ENCODE measurements at regions of chr7 and their contacts with region 1.

Region 1: DNA sequence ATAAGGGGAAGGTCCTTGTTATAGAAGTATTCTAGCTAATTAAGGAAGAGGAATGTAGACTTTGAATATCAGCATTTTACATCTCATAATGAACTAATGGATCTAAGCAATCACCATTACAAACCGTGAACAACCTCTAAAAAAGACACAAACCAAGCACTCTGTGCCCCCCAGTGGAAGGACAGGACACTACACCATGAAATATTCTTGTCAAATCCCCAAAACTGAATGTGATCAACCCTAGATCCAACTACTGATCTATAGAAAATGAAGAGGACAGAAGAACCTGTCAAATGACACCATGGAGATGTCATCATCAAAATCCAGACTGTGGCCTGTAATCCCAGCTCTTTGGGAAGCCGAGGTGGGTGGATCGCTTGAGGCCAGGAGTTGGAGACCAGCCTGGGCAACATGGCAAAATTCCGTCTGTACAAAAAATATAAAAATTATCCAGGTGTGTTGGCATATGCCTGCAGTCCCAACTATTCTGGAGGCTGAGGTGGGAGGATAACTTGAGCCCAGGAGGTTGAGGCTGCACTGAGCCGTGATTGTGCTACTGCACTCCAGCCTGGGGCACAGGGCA is 111.3 kb upstream of the CARD11 start:
- DNase-seq: peak; percentile 27 to 79 (median 66)
- ATAC-seq: peak; percentile 89
- H3K4me3 ChIP-seq: no peak overlapping the region
- H3K4me3 Mint-ChIP-seq: no peak overlapping the region
- H3K27ac ChIP-seq: no peak overlapping the region
- H3K27ac Mint-ChIP-seq: no peak overlapping the region
- H3K4me1 ChIP-seq: peaks cover 12% of the 10 kb centered on the region
- H3K4me1 Mint-ChIP-seq: peaks cover 13% of the 10 kb centered on the region
- H3K27me3 ChIP-seq: no peaks in the 10 kb centered on the region
- H3K27me3 Mint-ChIP-seq: no peaks in the 10 kb centered on the region
- CTCF ChIP-seq: peak; percentile 89

Region 2: GRCh38 chr7:1412322-1413261 is 1742.4 kb before region 1 on chr7:
- CTCF ChIA-PET with region 1: no interaction called
- POLR2A ChIA-PET with region 1: no interaction called
- intact Hi-C with region 1: no loop called
- DNase-seq: peak; percentile 80 to 97 (median 89)
- ATAC-seq: peak; percentile 91
- H3K4me3 ChIP-seq: peak overlapping the region; percentile 23 to 30
- H3K4me3 Mint-ChIP-seq: peak overlapping the region; percentile 61
- H3K27ac ChIP-seq: peak overlapping the region in 1 of 2 experiments; percentile 22
- H3K27ac Mint-ChIP-seq: no peak overlapping the region
- H3K4me1 ChIP-seq: peaks cover 24% of the 10 kb centered on the region
- H3K4me1 Mint-ChIP-seq: peaks cover 13% of the 10 kb centered on the region
- H3K27me3 ChIP-seq: peaks cover 0 to 3% of the 10 kb centered on the region in 2 experiments
- H3K27me3 Mint-ChIP-seq: peaks cover 6% of the 10 kb centered on the region
- CTCF ChIP-seq: peak; percentile 81

Region 3: GRCh38 chr7:2886900-2887299 is 268.1 kb before region 1 on chr7:
- CTCF ChIA-PET with region 1: interaction called, 33 read pairs
- POLR2A ChIA-PET with region 1: no interaction called
- intact Hi-C with region 1: loop called (anchors 1 kb)
- DNase-seq: peak in 7 of 9 experiments; percentile 14 to 83 (median 64)
- ATAC-seq: peak; percentile 77
- H3K4me3 ChIP-seq: no peak overlapping the region
- H3K4me3 Mint-ChIP-seq: no peak overlapping the region
- H3K27ac ChIP-seq: no peak overlapping the region
- H3K27ac Mint-ChIP-seq: no peak overlapping the region
- H3K4me1 ChIP-seq: no peaks in the 10 kb centered on the region
- H3K4me1 Mint-ChIP-seq: peaks cover 4% of the 10 kb centered on the region
- H3K27me3 ChIP-seq: no peaks in the 10 kb centered on the region
- H3K27me3 Mint-ChIP-seq: no peaks in the 10 kb centered on the region
- CTCF ChIP-seq: peak; percentile 69

Region 4: DNA sequence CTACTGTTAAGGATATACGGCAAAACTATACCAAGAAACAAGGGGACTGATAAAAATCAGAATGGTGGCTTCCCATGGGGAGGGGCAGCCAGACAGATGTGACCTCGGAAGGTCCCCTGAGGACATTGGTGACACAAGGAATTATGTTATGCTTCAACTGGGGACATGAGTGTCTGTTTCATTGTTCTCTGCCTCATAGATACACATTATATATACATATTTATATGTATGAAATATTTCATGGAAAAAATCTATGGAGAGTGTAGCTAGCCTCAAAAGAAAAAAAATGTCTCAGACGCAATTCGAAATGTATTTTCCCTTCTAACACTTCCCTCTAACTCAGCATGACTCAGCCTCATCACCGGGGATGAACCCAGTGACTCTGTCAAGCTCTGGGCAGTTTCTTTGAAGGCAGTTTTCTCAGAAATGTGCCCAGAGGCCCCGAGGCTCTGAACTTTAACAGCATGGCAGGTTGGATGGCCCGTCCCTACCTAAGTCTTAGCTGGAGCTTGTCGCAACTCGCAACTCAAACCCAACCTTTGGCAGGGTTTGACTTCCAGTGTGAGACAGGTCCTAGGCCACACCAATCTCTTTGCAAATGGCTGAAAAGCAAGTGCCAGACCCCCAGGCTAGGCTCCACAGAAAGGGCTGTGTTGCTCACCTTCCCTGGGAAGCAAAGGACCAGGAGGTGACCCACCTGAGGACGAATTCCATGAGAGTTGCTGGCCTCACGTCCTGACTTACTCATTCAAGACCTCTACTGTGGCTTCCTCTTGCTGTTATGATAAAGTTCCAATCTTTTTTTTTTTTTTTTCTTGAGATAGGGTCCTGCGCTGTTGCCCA is 198.3 kb before region 1 on chr7:
- CTCF ChIA-PET with region 1: interaction called, 5 read pairs
- POLR2A ChIA-PET with region 1: interaction called, 3 read pairs
- intact Hi-C with region 1: loop called in 1 of 2 experiments (anchors 10 kb)
- DNase-seq: peak in 4 of 9 experiments; percentile 20 to 57 (median 43)
- ATAC-seq: peak; percentile 33
- H3K4me3 ChIP-seq: no peak overlapping the region
- H3K4me3 Mint-ChIP-seq: no peak overlapping the region
- H3K27ac ChIP-seq: peak overlapping the region; percentile 10 to 60
- H3K27ac Mint-ChIP-seq: peak overlapping the region; percentile 72
- H3K4me1 ChIP-seq: peaks cover 53% of the 10 kb centered on the region
- H3K4me1 Mint-ChIP-seq: peaks cover 63% of the 10 kb centered on the region
- H3K27me3 ChIP-seq: no peaks in the 10 kb centered on the region
- H3K27me3 Mint-ChIP-seq: no peaks in the 10 kb centered on the region
- CTCF ChIP-seq: no peak

Region 5: DNA sequence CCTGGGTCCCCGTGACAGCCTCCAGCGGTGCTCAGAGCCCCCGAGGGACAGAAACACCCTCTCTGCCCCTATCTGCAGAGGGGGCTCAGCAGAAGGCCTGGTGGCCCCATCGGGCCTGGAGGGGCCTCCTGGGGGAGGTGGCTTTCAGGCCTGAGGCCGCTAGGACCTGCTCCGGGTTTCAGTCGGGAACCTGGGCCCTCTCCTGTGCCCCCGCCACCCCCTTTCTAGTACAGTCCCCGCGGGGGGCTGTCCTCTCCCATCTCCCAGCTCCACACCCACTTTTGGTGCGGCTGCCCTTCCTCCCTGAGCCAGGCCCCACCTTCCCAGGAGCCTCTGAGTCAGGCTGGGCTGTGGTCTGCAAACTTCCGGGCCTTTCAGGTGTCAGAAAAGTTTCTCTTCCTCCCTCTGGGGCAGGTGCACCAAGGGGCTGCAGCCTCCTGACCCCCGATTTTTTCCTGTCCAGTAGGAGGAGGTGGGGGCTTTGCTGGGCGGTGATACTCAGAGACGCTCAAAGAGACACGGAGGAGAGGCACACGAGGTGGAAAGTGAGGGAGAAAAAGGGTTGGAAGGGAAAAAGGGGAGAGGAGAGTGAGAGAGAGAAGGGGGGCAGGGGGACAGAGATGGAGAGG is 112.0 kb before region 1 on chr7:
- CTCF ChIA-PET with region 1: interaction called, 21 read pairs
- POLR2A ChIA-PET with region 1: no interaction called
- intact Hi-C with region 1: loop called (anchors 1 to 5 kb)
- DNase-seq: peak; percentile 20 to 82 (median 73)
- ATAC-seq: peak; percentile 61
- H3K4me3 ChIP-seq: peak overlapping the region; percentile 84 to 96
- H3K4me3 Mint-ChIP-seq: peak overlapping the region; percentile 92
- H3K27ac ChIP-seq: peak overlapping the region; percentile 84 to 88
- H3K27ac Mint-ChIP-seq: peak overlapping the region; percentile 94
- H3K4me1 ChIP-seq: peaks cover 49% of the 10 kb centered on the region
- H3K4me1 Mint-ChIP-seq: peaks cover 59% of the 10 kb centered on the region
- H3K27me3 ChIP-seq: no peaks in the 10 kb centered on the region
- H3K27me3 Mint-ChIP-seq: no peaks in the 10 kb centered on the region
- CTCF ChIP-seq: no peak

Region 6: DNA sequence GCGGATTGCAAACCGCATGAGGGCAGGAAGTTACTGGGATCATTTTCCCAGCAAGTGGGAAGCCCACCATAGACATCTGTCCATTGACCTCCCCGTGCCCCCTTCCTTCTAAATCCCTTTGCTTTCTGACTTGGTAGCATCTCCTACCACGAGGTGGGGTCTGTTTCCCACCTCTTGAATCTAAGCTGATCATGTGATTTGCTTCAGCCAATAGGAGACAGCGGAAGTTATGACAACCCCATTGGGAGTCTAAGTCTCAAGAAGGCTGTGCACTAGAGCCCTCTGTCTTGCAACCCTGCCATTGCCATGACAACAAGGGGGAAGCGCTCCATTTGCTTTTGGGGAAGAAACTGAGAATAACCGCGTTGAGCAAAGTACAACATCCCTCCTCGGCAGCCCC is 72.2 kb before region 1 on chr7:
- CTCF ChIA-PET with region 1: interaction called, 17 read pairs
- POLR2A ChIA-PET with region 1: no interaction called
- intact Hi-C with region 1: no loop called
- DNase-seq: peak in 2 of 9 experiments; percentile 20 to 45
- ATAC-seq: no peak
- H3K4me3 ChIP-seq: no peak overlapping the region
- H3K4me3 Mint-ChIP-seq: no peak overlapping the region
- H3K27ac ChIP-seq: no peak overlapping the region
- H3K27ac Mint-ChIP-seq: no peak overlapping the region
- H3K4me1 ChIP-seq: peaks cover 8% of the 10 kb centered on the region
- H3K4me1 Mint-ChIP-seq: peaks cover 10% of the 10 kb centered on the region
- H3K27me3 ChIP-seq: no peaks in the 10 kb centered on the region
- H3K27me3 Mint-ChIP-seq: no peaks in the 10 kb centered on the region
- CTCF ChIP-seq: no peak

Measured in CD8-positive, alpha-beta T cell (primary cell).